Posterior vena cava (tissue), 2 donors: ENCODE measurements at regions of chr11 and their contacts with region 1.

Region 1: DNA sequence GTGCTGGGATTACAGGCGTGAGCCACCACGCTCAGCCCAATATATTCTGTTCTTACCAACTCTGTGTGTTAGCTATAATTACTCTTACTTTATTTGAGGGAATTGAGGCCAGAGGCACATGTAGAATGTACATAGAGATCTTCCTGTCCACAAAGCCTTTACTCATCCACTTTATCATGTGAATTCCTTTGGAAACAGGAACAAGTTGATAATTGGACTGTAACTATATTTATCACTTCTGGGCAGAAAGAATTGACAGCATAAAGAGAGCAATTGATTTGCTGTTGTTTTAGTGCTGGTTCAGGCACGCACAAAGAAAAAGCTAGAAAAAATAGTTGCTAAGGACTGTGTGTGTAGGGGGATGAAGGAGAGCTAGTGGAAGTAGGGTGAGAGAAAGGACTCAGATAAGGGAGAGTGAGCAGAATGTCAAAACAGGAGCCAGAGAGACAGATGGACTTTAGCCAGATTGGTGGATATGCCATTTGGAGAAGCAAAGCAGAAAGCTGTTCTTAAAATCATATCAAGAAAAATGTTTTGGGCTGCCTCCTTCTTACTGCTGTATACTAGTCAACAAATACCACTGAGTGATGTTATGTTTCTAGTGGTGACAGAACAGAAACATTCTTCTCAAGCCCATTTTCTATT is 929.8 kb upstream of the CNTN5 start:
- DNase-seq: no peak

Region 2: DNA sequence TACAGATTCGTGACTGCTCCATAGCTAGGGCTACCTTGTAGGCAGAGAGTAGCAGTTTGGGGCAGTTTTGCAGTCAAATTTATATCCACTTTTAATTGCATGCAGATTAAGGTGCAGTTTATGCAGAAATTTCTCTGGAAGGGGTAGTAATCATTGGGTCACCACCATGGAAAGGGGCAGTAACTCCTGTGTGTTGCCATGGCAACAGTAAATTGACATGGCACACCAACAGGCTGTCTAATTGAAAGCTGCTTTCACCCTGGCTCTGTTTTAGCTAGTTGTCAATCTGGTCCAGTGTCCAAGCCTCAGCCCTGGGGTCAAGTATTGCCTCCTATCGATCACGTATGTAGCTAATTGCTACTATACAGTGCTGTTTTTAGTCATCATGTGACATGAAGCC is 143.7 kb after region 1 on chr11:
- intact Hi-C with region 1: loop called in 1 of 2 experiments (anchors 5 kb)
- DNase-seq: no peak

Region 3: DNA sequence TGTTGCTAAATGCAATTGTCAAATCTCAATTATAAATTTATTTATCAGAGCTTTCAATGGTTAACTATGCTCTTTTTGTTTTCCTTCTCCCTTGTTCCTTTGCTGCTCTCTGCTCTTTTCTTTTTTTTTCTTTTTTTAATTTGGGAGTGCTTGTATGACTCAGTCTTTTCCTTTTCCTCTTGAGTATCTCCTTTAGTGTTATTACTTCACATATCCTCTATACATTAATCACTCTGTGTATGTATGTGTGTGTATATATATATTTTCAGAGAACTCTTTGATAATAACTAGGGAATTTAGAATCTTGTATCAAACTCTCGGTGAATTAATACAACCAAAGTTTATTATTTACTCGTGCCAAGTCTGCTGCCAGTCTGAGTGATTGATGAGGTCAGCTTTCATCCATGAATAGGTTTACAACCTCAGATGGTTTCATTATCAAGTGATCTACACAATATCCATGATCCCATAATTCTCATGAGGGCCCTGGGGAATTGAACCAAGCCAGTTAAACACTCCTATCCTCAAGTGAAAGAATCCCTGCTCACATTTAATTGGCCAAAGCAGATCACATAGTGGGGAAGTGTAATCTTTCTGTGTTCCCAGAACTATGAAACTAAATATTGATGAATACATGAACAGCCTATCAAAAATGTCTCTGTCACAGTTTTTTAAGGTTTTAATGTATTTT is 186.4 kb after region 1 on chr11:
- intact Hi-C with region 1: no loop called
- DNase-seq: no peak